ENCODE measurements at regions of chr15 and their contacts with region 1.

Region 1: GRCh38 chr15:91302588-91303439 is 202.8 kb downstream of the SV2B start:
- DNase-seq: peak in 1 of 2 donors; percentile 20
- ATAC-seq: peak; percentile 80 to 81
- H3K4me3 ChIP-seq: no peak overlapping the region
- H3K27ac ChIP-seq: no peak overlapping the region
- H3K4me1 ChIP-seq: peaks cover 0 to 3% of the 10 kb centered on the region in 2 donors
- H3K27me3 ChIP-seq: peaks cover 2 to 15% (median 6%) of the 10 kb centered on the region in 3 donors
- CTCF ChIP-seq: peak; percentile 55 to 79 (median 68)
- POLR2A ChIP-seq: no peak

Region 2: DNA sequence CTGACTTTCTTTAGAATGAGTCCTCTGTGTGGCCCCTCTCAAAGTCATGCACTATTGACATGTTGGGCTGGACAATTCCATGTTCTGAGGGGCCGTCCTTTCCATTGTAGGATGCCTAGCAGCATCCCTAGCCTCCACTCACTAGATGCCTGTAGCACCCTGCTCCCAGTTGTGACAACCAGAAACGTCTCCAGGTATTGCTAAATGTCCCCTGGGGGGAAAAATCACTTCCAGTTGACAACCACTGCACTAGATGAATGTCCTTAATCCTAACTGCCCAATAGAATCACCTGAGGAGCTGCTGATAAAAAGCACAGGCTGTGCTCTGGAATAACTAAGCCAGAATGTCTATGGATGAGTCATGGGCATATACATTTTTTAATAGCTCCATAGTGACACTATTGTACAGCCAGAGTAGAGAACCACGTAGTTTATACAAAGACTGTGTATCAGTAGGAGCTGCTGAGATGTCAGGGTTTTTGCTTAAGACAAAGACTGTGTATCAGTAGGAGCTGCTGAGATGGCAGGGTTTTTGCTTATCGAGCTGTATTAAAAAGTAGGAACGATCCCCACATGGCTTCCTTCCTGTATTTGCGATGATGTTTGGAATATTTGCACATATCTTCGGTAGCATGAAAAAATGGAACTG is 65.5 kb before region 1 on chr15:
- in situ Hi-C with region 1: no loop called
- intact Hi-C with region 1: no loop called
- DNase-seq: no peak
- ATAC-seq: no peak
- H3K4me3 ChIP-seq: no peak overlapping the region
- H3K27ac ChIP-seq: no peak overlapping the region
- H3K4me1 ChIP-seq: no peaks in the 10 kb centered on the region
- H3K27me3 ChIP-seq: peaks cover 0 to 6% (median 3%) of the 10 kb centered on the region in 3 donors
- CTCF ChIP-seq: no peak
- POLR2A ChIP-seq: no peak

Region 3: DNA sequence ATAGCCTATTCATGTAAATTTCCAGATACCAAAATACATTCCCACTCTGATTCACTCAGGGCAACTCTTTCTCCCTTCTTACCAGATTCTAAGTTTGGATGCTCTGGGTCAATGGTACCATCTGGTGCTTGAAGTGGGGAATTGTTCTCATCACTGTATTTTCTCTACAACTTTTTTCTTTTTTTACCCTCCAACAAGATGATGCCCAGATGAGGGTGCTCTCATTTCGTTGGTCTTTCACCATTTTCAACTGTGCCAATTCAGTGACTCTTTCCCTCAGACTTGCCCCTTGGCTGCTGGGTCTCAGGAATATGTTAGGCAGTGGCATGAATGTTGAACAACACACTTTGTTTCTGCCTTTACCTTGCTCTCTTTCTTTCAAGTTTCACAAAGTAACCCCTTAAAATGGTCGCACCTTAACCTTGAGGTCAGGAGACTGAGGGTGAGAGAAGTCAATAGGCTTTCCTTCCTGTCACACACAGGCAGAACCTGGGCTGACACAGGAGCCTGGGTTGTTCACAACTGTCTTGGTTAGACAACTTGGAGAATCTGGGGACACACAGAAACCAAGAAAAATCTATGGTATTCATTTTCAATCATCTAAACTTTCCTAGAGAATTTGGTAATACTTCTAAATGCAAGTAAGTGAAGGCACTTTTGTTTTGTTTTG is 220.0 kb after region 1 on chr15:
- in situ Hi-C with region 1: loop called in 1 of 4 experiments (anchors 10 kb)
- intact Hi-C with region 1: loop called (anchors 10 kb)
- DNase-seq: no peak
- ATAC-seq: peak in 1 of 2 donors; percentile 69
- H3K4me3 ChIP-seq: no peak overlapping the region
- H3K27ac ChIP-seq: no peak overlapping the region
- H3K4me1 ChIP-seq: peaks cover 0 to 3% of the 10 kb centered on the region in 2 donors
- H3K27me3 ChIP-seq: no peaks in the 10 kb centered on the region
- CTCF ChIP-seq: peak in 3 of 5 experiments; percentile 18 to 29 (median 23)
- POLR2A ChIP-seq: no peak

Region 4: DNA sequence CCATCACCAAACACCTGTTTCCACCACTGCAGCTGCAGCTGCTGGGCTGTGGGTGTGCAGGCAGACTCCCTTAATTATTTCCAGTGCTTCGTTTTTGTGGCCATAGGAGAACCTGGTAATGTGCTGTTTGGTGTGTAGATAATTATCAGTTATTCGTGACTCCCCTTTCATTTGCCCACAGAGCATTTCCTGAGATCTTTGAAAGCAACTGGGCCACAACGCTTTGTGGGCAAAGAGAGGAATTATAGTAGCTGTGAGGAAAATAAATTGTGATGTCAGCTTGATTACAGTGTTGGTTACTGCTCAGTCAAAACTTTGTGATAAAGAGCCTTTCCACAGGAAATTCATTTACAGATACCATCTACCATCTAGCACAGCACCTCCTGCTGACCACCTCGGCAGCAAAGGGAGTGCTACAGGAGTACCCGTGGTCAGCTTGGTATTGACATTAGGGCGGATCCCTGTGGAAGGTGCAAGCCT is 357.4 kb after region 1 on chr15:
- in situ Hi-C with region 1: loop called in 1 of 4 experiments (anchors 25 kb)
- intact Hi-C with region 1: no loop called
- DNase-seq: no peak
- ATAC-seq: no peak
- H3K4me3 ChIP-seq: no peak overlapping the region
- H3K27ac ChIP-seq: no peak overlapping the region
- H3K4me1 ChIP-seq: no peaks in the 10 kb centered on the region
- H3K27me3 ChIP-seq: no peaks in the 10 kb centered on the region
- CTCF ChIP-seq: no peak
- POLR2A ChIP-seq: no peak